ENCODE measurements at regions of chr1 and their contacts with region 1.

Region 1: DNA sequence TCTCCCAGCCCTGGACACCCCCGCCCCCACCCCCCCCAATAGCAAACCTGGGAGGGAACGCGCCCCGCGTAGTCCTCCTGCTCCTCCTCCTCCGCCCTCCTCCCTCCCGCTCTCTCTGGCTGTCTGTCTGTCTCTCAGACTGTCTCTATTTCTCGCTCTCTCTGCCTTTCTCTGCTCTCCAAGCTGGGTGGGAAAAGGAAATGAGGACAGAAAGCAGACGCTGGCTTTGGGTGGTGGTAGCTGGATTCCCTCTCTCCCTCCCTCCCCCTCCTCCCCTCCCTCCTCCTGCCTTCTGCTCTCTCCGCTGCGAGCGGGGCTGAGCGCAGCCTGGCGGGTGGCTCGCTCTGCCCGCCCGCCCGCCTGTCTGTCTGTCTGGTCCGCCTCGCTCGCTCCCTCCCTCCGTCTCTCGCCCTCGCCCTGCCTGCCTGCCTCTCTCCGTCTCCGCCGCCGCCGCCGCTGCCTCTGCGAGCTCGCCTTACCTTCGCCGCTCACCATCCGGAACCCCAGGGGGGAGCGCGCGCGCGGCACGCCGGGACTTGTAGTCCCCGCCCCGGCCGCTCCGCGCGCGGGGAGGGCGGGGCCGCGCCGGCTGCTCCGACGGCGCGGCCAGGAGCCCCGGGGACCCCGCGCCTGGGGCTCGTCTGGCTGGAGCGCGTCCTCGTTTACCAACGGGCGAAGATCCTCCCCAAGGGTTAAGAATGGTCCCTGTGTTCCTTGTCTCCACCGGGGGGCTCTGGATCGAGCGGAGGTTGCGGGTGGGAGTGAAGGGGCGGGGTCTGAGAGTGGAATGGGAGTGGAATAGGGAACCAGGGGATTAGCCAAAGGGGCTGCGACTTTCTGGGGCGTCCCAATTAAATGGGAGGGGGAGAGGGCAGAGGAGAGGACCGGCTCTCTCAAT is at the start of gene AHDC1:
- DNase-seq: peak; percentile 96
- ATAC-seq: peak; percentile 64
- total RNA-seq, gene AHDC1: 61.9 TPM

Region 2: GRCh38 chr1:27568300-27569087 is 35.4 kb before region 1 on chr1:
- intact Hi-C with region 1: loop called (anchors 5 kb)
- DNase-seq: peak; percentile 95
- ATAC-seq: peak; percentile 81